ENCODE measurements at regions of chr2 and their contacts with region 1.

Region 1: GRCh38 chr2:221429741-221430491 is 142.2 kb downstream of the EPHA4 start:
- DNase-seq: peak; percentile 36
- H3K4me3 ChIP-seq: no peak overlapping the region
- H3K27ac ChIP-seq: no peak overlapping the region
- H3K4me1 ChIP-seq: peaks cover 9% of the 10 kb centered on the region
- H3K27me3 ChIP-seq: no peaks in the 10 kb centered on the region
- CTCF ChIP-seq: no peak

Region 2: DNA sequence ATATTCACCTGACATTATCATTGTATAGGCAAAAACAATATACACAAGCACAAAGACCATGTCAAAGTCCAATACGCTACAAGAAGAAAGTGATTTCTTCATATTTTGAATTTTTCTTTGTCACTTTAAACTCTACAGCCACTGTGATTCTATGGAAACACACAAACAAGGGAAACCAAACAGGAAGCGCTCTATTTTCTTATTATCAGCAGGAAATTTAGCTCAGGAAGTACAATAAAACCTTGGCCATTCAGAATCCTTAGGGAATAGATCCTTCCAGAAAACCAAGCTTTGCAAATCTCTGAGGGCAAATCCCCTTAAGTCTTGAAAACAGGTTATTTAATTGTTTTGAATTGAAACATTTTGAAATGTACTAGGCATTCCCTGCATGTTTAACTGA is 194.0 kb before region 1 on chr2:
- intact Hi-C with region 1: loop called (anchors 10 kb)
- DNase-seq: no peak
- H3K4me3 ChIP-seq: no peak overlapping the region
- H3K27ac ChIP-seq: peak overlapping the region; percentile 75
- H3K4me1 ChIP-seq: peaks cover 20% of the 10 kb centered on the region
- H3K27me3 ChIP-seq: no peaks in the 10 kb centered on the region
- CTCF ChIP-seq: no peak